Ascending aorta (tissue), 2 donors: ENCODE measurements at regions of chr13 and their contacts with region 1.

Region 1: DNA sequence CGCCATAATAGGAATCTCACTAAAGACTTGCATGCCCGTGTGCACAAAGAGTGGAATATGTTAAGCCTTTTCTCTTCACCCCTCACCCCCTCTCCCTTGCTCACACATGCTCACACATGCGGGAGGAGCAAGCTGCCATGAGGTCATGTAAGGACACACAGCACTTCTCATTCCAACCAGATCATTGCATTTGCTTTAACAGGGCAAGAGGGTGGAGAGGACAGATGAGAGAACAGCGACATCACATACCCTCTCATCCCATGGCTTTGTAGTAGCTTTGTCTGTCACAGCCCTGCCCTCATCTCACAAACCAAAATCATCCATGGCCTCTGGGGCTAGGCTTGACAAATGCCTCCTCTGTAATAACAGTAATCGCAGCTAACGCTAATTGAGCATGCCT is 145.6 kb upstream of the FRY start:
- DNase-seq: no peak
- H3K4me3 ChIP-seq: no peak overlapping the region
- H3K27ac ChIP-seq: peak overlapping the region in 1 of 2 donors; percentile 2
- H3K4me1 ChIP-seq: peaks cover 0 to 54% of the 10 kb centered on the region in 2 donors
- H3K27me3 ChIP-seq: no peaks in the 10 kb centered on the region
- CTCF ChIP-seq: no peak

Region 2: GRCh38 chr13:31749929-31750328 is 136.1 kb before region 1 on chr13:
- intact Hi-C with region 1: loop called (anchors 10 kb)
- DNase-seq: no peak
- H3K4me3 ChIP-seq: no peak overlapping the region
- H3K27ac ChIP-seq: no peak overlapping the region
- H3K4me1 ChIP-seq: no peaks in the 10 kb centered on the region
- H3K27me3 ChIP-seq: no peaks in the 10 kb centered on the region
- CTCF ChIP-seq: no peak

Region 3: DNA sequence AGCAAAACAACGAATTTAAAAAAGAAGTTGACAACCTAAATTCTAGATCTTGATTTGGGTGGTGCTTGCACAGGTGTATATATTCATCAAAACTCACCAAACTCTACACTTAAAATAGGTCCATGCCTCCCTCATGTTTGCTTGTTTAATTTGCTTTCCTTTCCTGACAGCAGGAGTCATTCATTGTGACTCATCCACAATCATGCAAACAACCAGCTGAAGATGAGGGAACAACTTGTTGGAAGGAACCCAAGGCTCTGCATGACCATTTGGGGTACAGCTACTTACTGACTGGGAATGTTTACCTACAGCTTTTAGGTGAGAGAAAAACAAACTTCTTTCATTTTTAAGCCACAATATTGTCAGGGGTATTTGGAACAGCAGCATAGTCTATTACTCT is 50.1 kb before region 1 on chr13:
- intact Hi-C with region 1: no loop called
- DNase-seq: no peak
- H3K4me3 ChIP-seq: no peak overlapping the region
- H3K27ac ChIP-seq: no peak overlapping the region
- H3K4me1 ChIP-seq: no peaks in the 10 kb centered on the region
- H3K27me3 ChIP-seq: no peaks in the 10 kb centered on the region
- CTCF ChIP-seq: no peak